Endothelial cell of umbilical vein (primary cell): ENCODE measurements at regions of chr14 and their contacts with region 1.

Region 1: DNA sequence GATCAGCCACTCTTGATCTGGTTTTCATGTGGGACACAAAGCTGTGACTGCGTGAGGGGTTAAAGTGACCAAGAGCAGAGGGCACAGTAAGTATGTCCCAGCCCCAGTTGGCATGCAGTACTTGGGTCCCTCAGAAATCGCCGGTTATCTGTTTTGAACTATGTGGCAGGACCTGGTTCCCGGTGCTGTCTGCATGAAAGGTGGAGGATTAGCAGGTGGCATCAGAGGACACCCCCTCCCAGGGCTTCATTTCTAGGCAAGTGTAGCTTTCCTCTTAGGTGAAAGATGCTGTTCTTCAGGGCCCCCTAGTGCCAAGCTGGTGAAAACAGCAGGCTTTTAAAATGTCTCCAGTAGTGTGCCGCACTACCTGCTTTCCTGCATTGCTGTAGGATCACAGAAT is 57.1 kb downstream of the ATG14 start:
- DNase-seq: peak; percentile 43
- H3K4me3 ChIP-seq: no peak overlapping the region
- H3K27ac ChIP-seq: no peak overlapping the region
- H3K4me1 ChIP-seq: no peaks in the 10 kb centered on the region
- H3K27me3 ChIP-seq: no peaks in the 10 kb centered on the region
- CTCF ChIP-seq: peak; percentile 54 to 72
- POLR2A ChIP-seq: no peak

Region 2: GRCh38 chr14:55026793-55027561 is 327.5 kb before region 1 on chr14 and contains the starts of genes SOCS4 and WDHD1:
- CTCF ChIA-PET with region 1: no interaction called
- POLR2A ChIA-PET with region 1: no interaction called
- dilution Hi-C with region 1: no loop called
- intact Hi-C with region 1: no loop called
- DNase-seq: peak; percentile 97
- H3K4me3 ChIP-seq: peak within 1 kb of the TSS; percentile 68 to 96 (median 86)
- H3K27ac ChIP-seq: peak within 1 kb of the TSS; percentile 61
- H3K4me1 ChIP-seq: peaks cover 30% of the 10 kb centered on the region
- H3K27me3 ChIP-seq: no peaks in the 10 kb centered on the region
- CTCF ChIP-seq: no peak
- POLR2A ChIP-seq: peak; percentile 77
- total RNA-seq, gene SOCS4: 26.7 and 28.7 TPM in 2 replicates
- total RNA-seq, gene WDHD1: 22.5 TPM in 2 replicates

Region 3: GRCh38 chr14:55212634-55213033 is 141.9 kb before region 1 on chr14:
- CTCF ChIA-PET with region 1: interaction called, 44 read pairs
- POLR2A ChIA-PET with region 1: no interaction called
- dilution Hi-C with region 1: no loop called
- intact Hi-C with region 1: loop called (anchors 1 kb)
- DNase-seq: no peak
- H3K4me3 ChIP-seq: no peak overlapping the region
- H3K27ac ChIP-seq: no peak overlapping the region
- H3K4me1 ChIP-seq: no peaks in the 10 kb centered on the region
- H3K27me3 ChIP-seq: no peaks in the 10 kb centered on the region
- CTCF ChIP-seq: no peak
- POLR2A ChIP-seq: no peak

Region 4: GRCh38 chr14:55957950-55958349 is 603.5 kb after region 1 on chr14:
- CTCF ChIA-PET with region 1: no interaction called
- POLR2A ChIA-PET with region 1: interaction called, 10 read pairs
- dilution Hi-C with region 1: no loop called
- intact Hi-C with region 1: no loop called
- DNase-seq: no peak
- H3K4me3 ChIP-seq: no peak overlapping the region
- H3K27ac ChIP-seq: no peak overlapping the region
- H3K4me1 ChIP-seq: no peaks in the 10 kb centered on the region
- H3K27me3 ChIP-seq: peaks cover 9 to 11% of the 10 kb centered on the region in 2 experiments
- CTCF ChIP-seq: no peak
- POLR2A ChIP-seq: no peak